ENCODE measurements at regions of chr3 and their contacts with region 1.

Region 1: DNA sequence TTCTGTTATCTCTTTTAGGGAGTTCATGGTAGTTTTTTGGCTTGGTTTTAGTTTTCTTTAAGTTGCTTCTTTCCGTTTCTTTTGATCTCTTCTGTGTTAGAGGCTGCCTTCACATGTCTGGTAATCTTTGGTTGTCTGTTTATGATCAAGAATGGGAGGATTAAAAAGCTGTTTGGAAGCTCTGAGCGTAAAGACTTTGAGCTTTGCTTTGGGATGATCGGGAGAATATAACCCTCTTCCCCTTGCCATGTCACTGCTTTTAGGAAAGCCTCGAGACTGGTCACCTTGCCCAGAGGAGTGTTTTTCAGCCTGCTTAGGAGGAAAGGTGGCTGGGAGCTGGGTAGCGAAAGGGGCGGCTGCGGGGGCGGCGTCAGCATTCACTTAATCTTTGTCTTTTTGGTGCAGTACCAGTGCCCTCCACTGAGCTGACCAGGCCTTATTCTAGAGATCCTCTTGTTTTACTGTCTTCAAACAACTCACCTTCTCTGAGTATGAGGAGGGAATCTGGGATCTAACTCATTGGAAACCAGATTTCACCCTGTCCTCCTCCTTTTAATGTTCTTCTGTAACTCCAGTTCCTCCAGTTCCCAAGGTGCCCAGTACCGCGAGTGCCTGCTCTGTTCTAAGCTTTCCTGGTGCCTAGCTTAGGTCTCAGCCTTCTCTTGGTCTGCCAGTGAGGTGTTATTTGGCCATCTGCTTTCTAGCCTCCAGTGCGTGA is 15.5 kb downstream of the TATDN2 start:
- DNase-seq: peak; percentile 79
- ATAC-seq: peak; percentile 99
- H3K4me3 Mint-ChIP-seq: no peak overlapping the region
- H3K27ac Mint-ChIP-seq: peak overlapping the region; percentile 75
- H3K4me1 Mint-ChIP-seq: peaks cover 11% of the 10 kb centered on the region
- H3K27me3 Mint-ChIP-seq: no peaks in the 10 kb centered on the region
- CTCF ChIP-seq: peak; percentile 59

Region 2: DNA sequence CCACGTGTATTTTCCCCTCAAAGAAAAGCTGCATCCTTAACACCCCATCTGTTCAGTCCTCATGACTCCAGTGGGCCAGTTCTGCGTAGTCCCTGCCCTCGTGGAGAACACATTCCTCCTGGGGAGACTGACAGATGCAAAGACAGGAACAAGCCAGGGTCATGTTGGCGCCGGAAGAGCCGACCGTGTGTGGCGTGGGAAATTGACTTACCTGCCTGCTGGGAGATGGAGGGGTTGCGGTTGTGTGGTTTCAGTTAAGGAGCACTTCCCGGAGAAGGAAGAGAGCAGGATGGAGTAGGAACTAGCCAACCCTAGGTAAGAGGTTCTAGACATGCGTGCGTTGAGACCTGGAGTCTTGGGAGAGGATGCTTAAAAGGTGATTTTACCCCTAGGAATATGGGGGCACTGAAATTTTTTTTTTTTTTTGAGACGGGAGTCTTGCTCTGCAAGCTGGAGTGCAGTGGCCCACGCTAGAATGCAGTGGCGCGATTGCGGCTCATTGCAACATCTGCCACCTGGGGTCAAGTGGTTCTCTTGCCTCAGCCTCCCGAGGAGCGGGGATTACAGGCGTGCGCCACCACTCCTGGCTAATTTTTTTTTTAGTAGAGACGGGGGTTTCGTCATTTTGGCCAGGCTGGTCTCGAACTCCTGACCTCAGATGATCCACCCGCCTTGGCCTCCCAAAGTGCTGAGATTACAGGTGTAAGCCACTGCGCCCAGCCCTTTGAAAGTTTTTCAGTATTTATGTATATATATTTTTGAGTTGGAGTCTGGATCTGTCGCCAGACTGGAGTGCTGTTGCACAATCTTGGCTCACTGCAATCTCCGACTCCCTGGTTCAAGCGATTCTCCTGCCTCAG is 120.9 kb before region 1 on chr3:
- CTCF ChIA-PET with region 1: no interaction called
- POLR2A ChIA-PET with region 1: no interaction called
- DNase-seq: no peak
- ATAC-seq: no peak
- H3K4me3 Mint-ChIP-seq: peak overlapping the region; percentile 83
- H3K27ac Mint-ChIP-seq: peak overlapping the region; percentile 87
- H3K4me1 Mint-ChIP-seq: peaks cover 12% of the 10 kb centered on the region
- H3K27me3 Mint-ChIP-seq: no peaks in the 10 kb centered on the region
- CTCF ChIP-seq: no peak

Region 3: DNA sequence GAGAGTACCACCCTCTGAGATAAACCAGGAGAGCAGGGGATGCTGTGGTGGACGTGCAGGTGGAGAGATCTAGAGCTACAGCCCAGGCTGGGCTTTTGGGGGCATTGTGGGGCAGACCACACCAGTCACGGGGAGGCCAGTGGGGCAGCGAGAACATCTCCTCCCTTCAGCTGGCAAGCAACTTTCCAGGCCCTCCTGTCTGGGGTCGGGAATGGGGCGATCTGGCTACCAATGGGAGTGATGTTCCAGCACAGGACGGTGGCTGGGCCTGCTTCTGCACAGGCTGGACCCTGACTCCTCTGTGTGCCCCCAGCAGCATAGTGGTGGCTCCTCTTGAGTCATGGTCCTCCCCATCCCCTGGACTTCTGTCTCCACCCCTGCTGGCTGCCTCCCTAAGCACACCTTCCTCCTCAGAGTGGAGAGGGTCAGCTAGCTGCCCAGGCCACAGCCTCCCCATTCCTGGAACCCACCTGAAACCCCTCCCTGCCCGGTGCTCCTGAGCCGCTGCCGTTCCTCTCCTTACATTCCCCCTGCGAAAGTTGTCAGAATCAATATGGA is 83.0 kb before region 1 on chr3:
- CTCF ChIA-PET with region 1: no interaction called
- POLR2A ChIA-PET with region 1: no interaction called
- DNase-seq: no peak
- ATAC-seq: no peak
- H3K4me3 Mint-ChIP-seq: no peak overlapping the region
- H3K27ac Mint-ChIP-seq: no peak overlapping the region
- H3K4me1 Mint-ChIP-seq: no peaks in the 10 kb centered on the region
- H3K27me3 Mint-ChIP-seq: no peaks in the 10 kb centered on the region
- CTCF ChIP-seq: no peak

Region 4: GRCh38 chr3:10224784-10225665 is 38.8 kb before region 1 on chr3:
- CTCF ChIA-PET with region 1: interaction called, 17 read pairs
- POLR2A ChIA-PET with region 1: no interaction called
- DNase-seq: peak; percentile 68
- ATAC-seq: peak; percentile 78
- H3K4me3 Mint-ChIP-seq: no peak overlapping the region
- H3K27ac Mint-ChIP-seq: peak overlapping the region; percentile 88
- H3K4me1 Mint-ChIP-seq: peaks cover 27% of the 10 kb centered on the region
- H3K27me3 Mint-ChIP-seq: no peaks in the 10 kb centered on the region
- CTCF ChIP-seq: peak; percentile 46; the same call in 1 of the 2 replicates

Region 5: DNA sequence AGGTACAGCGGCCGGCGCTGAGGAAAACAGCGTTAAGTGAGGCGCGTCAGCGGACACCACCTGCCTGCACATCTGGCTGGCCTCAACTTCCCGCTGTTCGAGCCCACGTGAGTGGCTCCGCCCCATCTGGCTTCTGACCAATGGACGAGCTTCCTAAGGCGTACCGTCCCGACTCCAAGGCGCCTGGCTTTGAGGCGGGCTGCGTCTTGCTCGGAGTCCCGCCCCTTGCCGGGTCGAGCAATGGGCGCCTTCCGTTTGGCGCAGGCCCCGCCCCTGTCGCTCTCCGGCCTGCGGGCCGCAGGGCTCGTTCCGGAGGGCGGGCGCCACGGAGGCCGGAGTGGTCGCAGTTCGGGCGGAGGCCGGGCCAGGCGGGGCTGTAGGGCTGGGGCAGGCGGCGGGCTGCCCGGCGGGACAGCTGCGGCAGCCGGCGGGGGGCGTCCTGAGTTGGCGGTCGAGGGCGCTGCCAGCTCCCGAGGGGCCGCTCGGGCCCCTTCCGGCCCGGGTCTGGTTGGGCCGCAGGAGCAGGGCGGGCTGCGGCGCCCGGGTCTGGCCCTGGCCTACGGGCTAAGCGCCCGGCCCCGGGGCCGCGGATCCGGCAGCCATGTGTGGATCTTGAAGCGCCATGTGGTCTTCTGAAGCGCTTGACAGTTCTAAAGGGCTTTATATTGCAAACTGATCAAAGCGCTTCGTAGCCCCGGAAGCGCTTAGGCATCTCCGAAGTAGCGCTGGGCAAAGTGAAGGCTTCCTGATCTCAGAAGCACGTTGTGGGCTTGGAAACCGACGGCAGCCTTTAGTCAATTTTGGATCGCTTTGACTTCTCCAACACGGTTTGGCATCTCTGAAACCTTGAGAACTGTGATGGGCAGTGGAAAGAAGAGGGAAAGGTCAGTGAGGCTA is 15.4 kb before region 1 on chr3 and contains the start of gene TATDN2:
- CTCF ChIA-PET with region 1: interaction called, 18 read pairs
- POLR2A ChIA-PET with region 1: interaction called, 10 read pairs
- DNase-seq: peak; percentile 97
- ATAC-seq: peak; percentile 97
- H3K4me3 Mint-ChIP-seq: peak within 1 kb of the TSS; percentile 92
- H3K27ac Mint-ChIP-seq: peak within 1 kb of the TSS; percentile 97
- H3K4me1 Mint-ChIP-seq: peaks cover 25% of the 10 kb centered on the region
- H3K27me3 Mint-ChIP-seq: peaks cover 30% of the 10 kb centered on the region
- CTCF ChIP-seq: no peak
- total RNA-seq, gene TATDN2: 23.2 to 31.7 TPM (median 24.7 TPM) in 3 replicates

Region 6: GRCh38 chr3:10280177-10280529 is 16.3 kb after region 1 on chr3:
- CTCF ChIA-PET with region 1: interaction called, 19 read pairs
- POLR2A ChIA-PET with region 1: no interaction called
- DNase-seq: no peak
- ATAC-seq: peak; percentile 67
- H3K4me3 Mint-ChIP-seq: no peak overlapping the region
- H3K27ac Mint-ChIP-seq: no peak overlapping the region
- H3K4me1 Mint-ChIP-seq: no peaks in the 10 kb centered on the region
- H3K27me3 Mint-ChIP-seq: no peaks in the 10 kb centered on the region
- CTCF ChIP-seq: no peak

Region 7: DNA sequence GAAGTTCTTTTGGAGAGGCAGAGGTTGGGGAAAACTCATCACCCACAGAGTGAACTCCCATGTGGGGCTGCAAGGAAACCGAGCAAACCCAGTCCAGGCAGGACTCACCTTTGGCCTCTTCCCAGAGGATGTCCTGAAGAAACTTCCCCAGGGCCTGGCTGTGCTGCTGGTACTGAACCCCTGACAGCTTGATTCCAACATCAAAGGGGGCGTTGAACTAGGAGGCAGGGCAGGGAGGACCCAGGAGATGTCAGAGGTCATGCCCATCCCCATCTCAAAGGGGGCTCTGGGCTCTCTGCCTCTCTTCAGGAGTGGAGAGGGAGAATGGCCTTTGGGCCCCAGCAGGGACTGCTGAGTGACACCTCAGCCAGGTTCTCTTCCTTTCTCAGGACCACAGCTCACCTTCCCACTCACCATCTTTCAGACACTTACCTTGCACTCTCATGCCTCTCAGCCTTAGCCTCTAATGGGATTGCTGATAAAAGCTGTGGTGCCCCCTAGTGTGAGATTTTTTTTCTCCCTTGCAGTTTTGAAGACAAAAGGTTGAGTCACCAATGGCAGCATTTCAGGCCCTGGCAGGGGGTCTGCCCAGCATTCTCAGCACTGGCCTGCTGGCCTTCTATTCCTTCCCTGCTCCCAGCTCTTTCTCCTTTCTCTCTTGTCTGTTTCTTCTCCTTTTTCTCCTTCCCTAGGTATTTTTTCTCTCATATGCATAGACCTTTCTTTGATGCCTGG is 23.0 kb after region 1 on chr3:
- CTCF ChIA-PET with region 1: interaction called, 12 read pairs
- POLR2A ChIA-PET with region 1: no interaction called
- DNase-seq: no peak
- ATAC-seq: no peak; the same call in none of the 2 replicates
- H3K4me3 Mint-ChIP-seq: no peak overlapping the region
- H3K27ac Mint-ChIP-seq: peak overlapping the region; percentile 56; the same call in 1 of the 2 replicates
- H3K4me1 Mint-ChIP-seq: peaks cover 9% of the 10 kb centered on the region
- H3K27me3 Mint-ChIP-seq: no peaks in the 10 kb centered on the region
- CTCF ChIP-seq: no peak

Region 8: DNA sequence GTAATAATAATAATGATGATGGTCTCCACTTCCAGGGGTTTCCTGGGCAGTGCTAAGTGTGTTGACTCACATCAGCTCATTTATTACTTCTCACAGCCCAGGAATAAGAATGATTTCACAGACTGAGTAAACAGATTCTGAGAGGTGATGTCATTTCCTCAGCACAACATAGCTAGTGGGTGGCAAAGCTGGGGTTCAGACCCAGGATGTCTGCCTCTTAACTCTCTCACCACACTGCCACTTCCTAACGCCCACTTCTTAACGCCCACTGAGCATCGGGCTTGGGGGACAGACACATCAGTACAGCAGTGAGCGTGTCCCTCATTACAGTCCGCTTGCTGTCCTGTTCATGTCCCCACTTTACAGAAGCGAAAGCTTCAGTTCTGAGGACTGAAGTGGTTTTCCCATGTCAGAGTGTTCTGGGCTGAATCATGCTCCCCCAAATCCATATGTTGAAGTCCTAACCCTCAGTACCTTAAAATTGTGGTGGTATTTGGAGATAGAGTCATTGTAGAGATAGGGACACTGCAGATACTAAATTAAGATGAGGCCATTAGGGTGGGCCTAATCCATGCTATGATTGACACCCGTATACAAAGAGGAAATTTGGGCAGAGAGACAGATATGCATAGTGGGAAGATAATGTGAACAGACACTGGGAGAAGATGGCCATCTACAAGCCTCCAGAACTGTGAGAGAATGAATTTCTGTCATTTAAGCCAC is 173.6 kb after region 1 on chr3:
- CTCF ChIA-PET with region 1: no interaction called
- POLR2A ChIA-PET with region 1: no interaction called
- DNase-seq: no peak
- ATAC-seq: no peak
- H3K4me3 Mint-ChIP-seq: no peak overlapping the region
- H3K27ac Mint-ChIP-seq: no peak overlapping the region
- H3K4me1 Mint-ChIP-seq: 0 out of 2 replicates have a peak, but pooled peaks cover 2% of the 10 kb centered on the region
- H3K27me3 Mint-ChIP-seq: no peaks in the 10 kb centered on the region
- CTCF ChIP-seq: no peak

Measured in WTC11 (cell line).